ENCODE measurements at regions of chr9 and their contacts with region 1.

Region 1: DNA sequence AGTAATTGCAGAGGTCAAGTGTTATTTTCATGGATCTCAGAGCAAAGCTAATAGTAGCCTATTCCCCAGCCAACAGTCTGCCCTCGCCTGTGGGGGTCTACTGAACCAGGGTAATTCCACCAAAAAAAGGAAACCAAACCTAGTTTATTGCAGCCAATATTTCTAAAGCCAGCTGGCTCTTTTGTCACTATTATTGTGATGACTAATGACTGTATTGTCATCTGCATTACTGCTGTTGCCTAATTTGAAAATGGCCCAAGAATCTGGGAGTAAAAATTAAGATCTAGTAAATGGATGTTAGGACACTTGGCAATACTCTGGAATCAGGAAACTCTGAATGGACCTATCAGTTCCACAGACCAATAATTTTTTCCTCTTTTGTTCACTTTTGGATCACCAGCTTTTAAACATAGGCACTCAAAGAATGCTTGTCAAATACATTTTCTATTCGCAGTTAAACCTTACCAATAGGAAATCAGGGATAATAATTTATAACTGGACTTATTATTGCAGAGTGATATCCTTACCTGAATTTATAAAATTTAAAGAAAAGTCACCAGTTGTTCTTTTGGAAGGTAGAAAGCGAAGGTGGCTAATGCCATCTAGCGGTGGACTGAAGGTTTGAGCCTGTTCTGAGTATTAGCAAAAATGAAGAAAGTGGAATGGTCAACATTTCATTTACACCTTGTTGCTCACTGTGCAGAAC is 69.2 kb downstream of the SYK start:
- DNase-seq: no peak
- H3K4me3 Mint-ChIP-seq: no peak overlapping the region
- H3K27ac Mint-ChIP-seq: no peak overlapping the region
- H3K4me1 Mint-ChIP-seq: peaks cover 6% of the 10 kb centered on the region
- H3K27me3 Mint-ChIP-seq: peaks cover 9% of the 10 kb centered on the region

Region 2: GRCh38 chr9:90142580-90142979 is 728.2 kb before region 1 on chr9:
- intact Hi-C with region 1: loop called (anchors 5 kb)
- DNase-seq: no peak
- H3K4me3 Mint-ChIP-seq: no peak overlapping the region
- H3K27ac Mint-ChIP-seq: no peak overlapping the region
- H3K4me1 Mint-ChIP-seq: no peaks in the 10 kb centered on the region
- H3K27me3 Mint-ChIP-seq: peaks cover 36% of the 10 kb centered on the region

Region 3: GRCh38 chr9:90773617-90774016 is 97.2 kb before region 1 on chr9:
- intact Hi-C with region 1: loop called (anchors 5 kb)
- DNase-seq: no peak
- H3K4me3 Mint-ChIP-seq: no peak overlapping the region
- H3K27ac Mint-ChIP-seq: no peak overlapping the region
- H3K4me1 Mint-ChIP-seq: no peaks in the 10 kb centered on the region
- H3K27me3 Mint-ChIP-seq: peaks cover 7% of the 10 kb centered on the region

Region 4: GRCh38 chr9:91312717-91313344 is 442.1 kb after region 1 on chr9:
- intact Hi-C with region 1: no loop called
- DNase-seq: no peak
- H3K4me3 Mint-ChIP-seq: no peak overlapping the region
- H3K27ac Mint-ChIP-seq: no peak overlapping the region
- H3K4me1 Mint-ChIP-seq: peaks cover 34% of the 10 kb centered on the region
- H3K27me3 Mint-ChIP-seq: no peaks in the 10 kb centered on the region